ENCODE measurements at regions of chr9 and their contacts with region 1.

Region 1: GRCh38 chr9:124239249-124240073 is 18.3 kb upstream of the NEK6 start:
- DNase-seq: no peak
- H3K4me3 ChIP-seq: no peak overlapping the region
- H3K27ac ChIP-seq: no peak overlapping the region
- H3K4me1 ChIP-seq: no peaks in the 10 kb centered on the region
- H3K27me3 ChIP-seq: no peaks in the 10 kb centered on the region
- CTCF ChIP-seq: no peak
- POLR2A ChIP-seq: no peak

Region 2: DNA sequence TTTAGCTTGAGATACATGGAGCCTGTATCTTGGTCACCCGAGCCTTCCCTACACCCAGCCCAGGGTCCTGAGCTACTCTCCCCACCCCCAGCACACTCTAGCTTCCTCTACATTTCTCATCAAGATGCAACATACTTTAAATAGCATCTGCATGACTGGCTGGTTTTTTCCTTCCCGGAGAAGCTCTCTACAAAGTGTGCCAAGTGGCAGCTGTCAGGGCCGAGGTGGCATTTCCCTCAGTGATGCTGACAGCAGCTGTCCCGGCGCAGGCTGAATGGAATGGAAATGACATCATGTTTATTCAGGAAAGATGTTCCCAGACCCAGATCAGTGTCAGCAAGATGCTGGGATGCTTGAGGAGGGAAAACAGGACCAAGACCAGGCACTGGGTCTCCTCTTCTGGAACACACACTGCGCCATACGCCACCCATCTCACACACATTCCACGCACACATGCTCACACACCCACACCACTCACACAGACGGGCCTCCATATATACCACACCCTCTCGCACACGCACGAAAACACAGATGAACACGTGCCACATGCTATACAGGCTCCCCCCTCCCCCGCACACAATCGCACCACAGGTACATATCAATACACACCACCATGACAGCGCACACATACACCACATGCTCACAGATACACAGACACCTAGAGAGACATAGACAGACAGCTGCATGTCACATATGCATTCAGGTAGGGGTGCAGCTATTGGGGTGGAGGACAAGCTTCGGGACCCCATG is 160.1 kb before region 1 on chr9:
- intact Hi-C with region 1: no loop called
- DNase-seq: no peak
- H3K4me3 ChIP-seq: no peak overlapping the region
- H3K27ac ChIP-seq: no peak overlapping the region
- H3K4me1 ChIP-seq: no peaks in the 10 kb centered on the region
- H3K27me3 ChIP-seq: no peaks in the 10 kb centered on the region
- CTCF ChIP-seq: no peak
- POLR2A ChIP-seq: no peak

Region 3: GRCh38 chr9:124291801-124292396 is 52.4 kb after region 1 on chr9:
- intact Hi-C with region 1: loop called (anchors 10 kb)
- DNase-seq: no peak
- H3K4me3 ChIP-seq: no peak overlapping the region
- H3K27ac ChIP-seq: no peak overlapping the region
- H3K4me1 ChIP-seq: peaks cover 52% of the 10 kb centered on the region
- H3K27me3 ChIP-seq: no peaks in the 10 kb centered on the region
- CTCF ChIP-seq: no peak
- POLR2A ChIP-seq: no peak